HEK293 (cell line): ENCODE measurements at regions of chr10 and their contacts with region 1.

Region 1: DNA sequence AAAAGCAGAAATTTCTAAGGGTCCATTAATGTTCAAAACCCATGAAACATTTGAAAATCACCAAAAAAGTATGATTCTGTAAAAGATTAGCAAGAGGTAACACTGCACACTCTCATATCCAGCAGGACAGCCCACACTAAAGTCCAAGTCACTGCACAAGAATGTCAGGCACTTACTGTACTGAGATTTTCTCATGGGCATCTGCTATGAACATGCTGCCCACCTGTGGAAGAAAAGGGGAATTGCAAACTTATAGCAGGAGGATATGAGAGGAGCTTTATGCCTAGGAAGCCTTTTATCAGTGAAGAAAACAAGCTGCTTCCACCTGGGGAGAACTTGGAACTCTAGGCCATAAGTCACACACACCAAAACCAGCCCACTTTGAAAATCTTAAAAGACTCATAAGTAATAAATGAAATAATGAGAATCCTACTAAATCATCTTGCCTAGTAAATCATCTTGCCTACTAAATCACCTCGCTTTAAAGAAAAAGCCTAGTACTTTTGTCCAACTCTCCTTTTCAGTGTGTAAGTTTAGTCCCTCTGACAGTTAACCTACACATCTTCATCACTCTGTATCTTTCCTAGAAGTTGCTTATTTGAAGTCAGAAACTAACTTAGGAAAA is 46.1 kb downstream of the ARMH3 start:
- H3K4me3 ChIP-seq: no peak overlapping the region
- H3K27ac ChIP-seq: no peak overlapping the region
- H3K4me1 ChIP-seq: no peaks in the 10 kb centered on the region
- CTCF ChIP-seq: peak; percentile 80; the same call in 1 of the 2 replicates

Region 2: GRCh38 chr10:101840741-101841453 is 169.0 kb before region 1 on chr10:
- CTCF ChIA-PET with region 1: interaction called, 178 read pairs
- POLR2A ChIA-PET with region 1: interaction called, 18 read pairs
- H3K4me3 ChIP-seq: peak overlapping the region; percentile 2
- H3K27ac ChIP-seq: no peak overlapping the region
- H3K4me1 ChIP-seq: peaks cover 6% of the 10 kb centered on the region
- CTCF ChIP-seq: peak; percentile 96

Region 3: DNA sequence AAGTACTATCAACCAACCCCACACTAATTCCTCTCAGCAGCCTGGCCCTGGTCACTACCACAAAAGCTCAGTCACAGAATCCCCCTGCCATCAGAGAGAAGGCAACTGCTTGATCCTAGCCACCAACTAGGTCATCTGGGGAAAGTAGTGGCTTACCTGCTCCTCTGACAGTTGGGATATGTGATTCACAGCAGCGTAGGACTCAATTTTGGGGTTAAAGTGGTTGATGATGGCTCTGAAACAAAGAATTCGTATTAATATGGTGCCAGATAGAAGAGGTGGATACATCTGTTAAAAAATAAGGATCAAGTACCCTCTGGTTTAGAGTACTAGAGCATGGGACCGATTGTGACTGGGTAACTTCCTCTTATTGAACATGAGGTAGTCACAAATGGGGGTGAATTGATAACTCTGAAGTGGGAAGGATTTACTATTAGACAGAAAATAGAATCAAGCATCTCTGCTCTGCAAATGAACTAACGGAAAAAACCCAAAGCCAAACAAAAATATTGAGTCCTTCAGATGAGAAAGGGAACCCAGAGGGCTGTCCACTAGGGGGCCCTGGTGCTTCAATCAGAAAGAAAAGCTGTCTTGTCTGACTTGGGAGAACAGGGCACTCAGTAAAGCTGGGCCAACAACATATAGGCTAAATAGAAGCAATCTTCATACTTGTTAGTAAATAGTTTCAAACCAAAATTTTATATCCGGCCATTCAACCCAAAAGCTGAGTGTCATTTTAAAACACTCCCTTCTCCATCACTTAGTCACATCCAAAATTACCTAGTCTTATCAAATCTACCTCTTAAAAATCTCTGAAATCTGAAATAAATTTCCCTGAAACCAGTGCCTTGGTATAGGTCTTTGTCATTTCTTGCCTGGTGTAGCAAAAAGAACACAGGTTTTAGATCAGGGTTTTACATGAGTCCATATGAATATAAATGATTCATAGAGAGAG is 120.4 kb before region 1 on chr10:
- CTCF ChIA-PET with region 1: interaction called, 167 read pairs
- POLR2A ChIA-PET with region 1: interaction called, 3 read pairs
- H3K4me3 ChIP-seq: no peak overlapping the region
- H3K27ac ChIP-seq: no peak overlapping the region
- H3K4me1 ChIP-seq: peaks cover 9% of the 10 kb centered on the region; the same call in 1 of the 2 replicates
- CTCF ChIP-seq: peak; percentile 56; the same call in 1 of the 2 replicates

Region 4: DNA sequence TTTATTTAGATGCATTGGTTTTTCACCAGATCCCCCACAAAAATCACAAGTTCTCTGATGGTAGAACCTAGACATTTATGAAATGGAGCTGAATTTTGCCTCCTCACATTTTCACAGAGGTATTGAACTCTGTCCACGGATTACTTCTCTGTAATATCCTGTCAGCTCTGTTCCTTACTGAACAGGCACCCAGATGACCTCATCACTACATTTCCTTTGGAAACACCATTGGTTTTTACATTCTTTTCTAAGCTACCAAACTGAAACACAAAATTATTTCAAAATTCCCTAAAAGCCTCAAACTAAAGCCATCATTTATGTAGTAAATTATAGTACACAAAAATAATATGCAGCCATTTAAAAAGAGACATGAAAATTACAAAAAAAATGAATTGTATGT is 68.0 kb before region 1 on chr10:
- CTCF ChIA-PET with region 1: interaction called, 10 read pairs
- POLR2A ChIA-PET with region 1: no interaction called
- H3K4me3 ChIP-seq: no peak overlapping the region
- H3K27ac ChIP-seq: no peak overlapping the region
- H3K4me1 ChIP-seq: peaks cover 9% of the 10 kb centered on the region
- CTCF ChIP-seq: no peak

Region 5: DNA sequence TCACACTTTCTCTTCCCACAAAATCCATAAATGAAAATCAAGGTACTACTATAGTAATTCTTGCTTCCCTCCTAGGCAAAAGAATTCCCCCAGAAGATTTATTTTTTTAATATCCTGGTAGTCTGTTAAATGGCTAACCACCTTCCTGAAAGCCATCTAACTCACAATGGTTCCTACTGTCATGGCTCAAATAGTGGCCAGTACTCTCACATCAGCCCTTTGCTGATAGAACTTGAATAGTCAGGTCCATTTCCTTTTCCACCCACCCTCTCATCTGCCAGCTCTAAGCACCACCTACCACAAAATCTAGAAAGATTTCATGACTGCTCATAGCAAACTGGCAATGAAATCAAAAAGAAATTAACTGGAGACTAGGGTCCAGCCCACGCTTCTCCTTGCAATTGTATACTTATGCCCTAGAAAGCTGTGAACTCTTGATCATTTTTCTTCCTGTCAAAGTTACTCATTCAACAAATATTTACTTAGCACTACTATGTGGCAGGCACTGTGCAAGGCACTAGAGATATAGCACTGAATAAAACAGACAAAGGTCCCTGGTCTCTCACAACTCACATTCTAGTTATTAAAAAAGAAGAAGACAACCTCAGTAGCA is 14.4 kb before region 1 on chr10:
- CTCF ChIA-PET with region 1: interaction called, 43 read pairs
- POLR2A ChIA-PET with region 1: interaction called, 4 read pairs
- H3K4me3 ChIP-seq: no peak overlapping the region
- H3K27ac ChIP-seq: no peak overlapping the region
- H3K4me1 ChIP-seq: peaks cover 7% of the 10 kb centered on the region
- CTCF ChIP-seq: no peak

Region 6: GRCh38 chr10:102064868-102065560 is 55.1 kb after region 1 on chr10 and contains the start of gene HPS6:
- CTCF ChIA-PET with region 1: interaction called, 16 read pairs
- POLR2A ChIA-PET with region 1: no interaction called
- H3K4me3 ChIP-seq: peak within 1 kb of the TSS; percentile 76
- H3K27ac ChIP-seq: peak within 1 kb of the TSS; percentile 94
- H3K4me1 ChIP-seq: peaks cover 8% of the 10 kb centered on the region
- CTCF ChIP-seq: peak; percentile 72

Region 7: DNA sequence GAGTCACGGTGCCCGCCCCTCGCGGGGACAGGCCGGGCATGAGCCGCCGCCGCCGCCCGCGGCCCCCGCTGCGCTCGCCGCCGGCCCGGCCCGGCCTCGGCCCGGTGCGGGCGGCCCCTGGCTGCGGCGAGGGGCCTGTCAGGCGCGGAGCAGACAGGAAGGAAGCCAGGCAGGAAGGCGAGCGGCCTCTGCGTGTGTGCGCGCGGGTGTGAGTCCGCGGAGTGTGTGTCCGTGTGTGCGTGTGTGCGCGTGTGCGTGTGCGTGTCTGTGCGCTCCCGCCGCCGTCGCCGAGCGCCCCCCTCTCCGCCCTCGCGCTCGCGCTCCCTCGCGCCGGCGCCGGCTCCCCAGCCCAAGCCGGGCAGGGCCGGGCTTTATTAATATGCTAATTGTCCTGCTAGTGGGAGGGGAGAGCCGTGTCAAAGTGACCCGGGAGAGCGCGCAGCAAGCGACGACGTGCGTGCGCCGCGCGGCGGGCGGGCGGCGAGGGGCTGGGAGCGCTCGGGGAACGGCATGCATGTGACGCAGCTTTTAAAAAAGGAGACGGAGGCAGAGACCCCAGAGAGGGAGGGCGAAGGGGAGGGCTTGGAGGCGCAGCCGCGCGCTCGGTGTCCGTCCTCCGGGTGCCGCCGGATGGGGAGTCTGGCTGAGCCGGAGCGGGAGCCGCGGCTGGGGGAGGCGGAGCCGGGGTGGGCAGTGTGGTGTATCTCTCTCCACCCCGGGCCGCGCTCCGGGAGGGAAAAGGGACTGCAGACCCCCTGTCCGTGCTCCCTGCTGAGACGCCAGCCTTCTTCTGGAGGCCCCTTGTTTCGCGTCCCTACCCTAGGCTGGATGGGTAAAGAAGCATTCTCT is 110.5 kb after region 1 on chr10 and contains the start of gene LDB1:
- CTCF ChIA-PET with region 1: no interaction called
- POLR2A ChIA-PET with region 1: no interaction called
- H3K4me3 ChIP-seq: peak within 1 kb of the TSS; percentile 71
- H3K27ac ChIP-seq: peak within 1 kb of the TSS; percentile 88
- H3K4me1 ChIP-seq: peaks cover 36% of the 10 kb centered on the region
- CTCF ChIP-seq: no peak; the same call in 1 of the 2 replicates

Region 8: GRCh38 chr10:102555781-102556328 is 545.9 kb after region 1 on chr10:
- CTCF ChIA-PET with region 1: no interaction called
- POLR2A ChIA-PET with region 1: no interaction called
- H3K4me3 ChIP-seq: no peak overlapping the region
- H3K27ac ChIP-seq: no peak overlapping the region
- H3K4me1 ChIP-seq: no peaks in the 10 kb centered on the region
- CTCF ChIP-seq: no peak